AG04449 (cell line): ENCODE measurements at regions of chr1 and their contacts with region 1.

Region 1: GRCh38 chr1:110460253-110461220 is 9.6 kb downstream of the PROK1 start:
- DNase-seq: peak; percentile 24
- H3K4me3 ChIP-seq: no peak overlapping the region
- CTCF ChIP-seq: peak; percentile 84

Region 2: DNA sequence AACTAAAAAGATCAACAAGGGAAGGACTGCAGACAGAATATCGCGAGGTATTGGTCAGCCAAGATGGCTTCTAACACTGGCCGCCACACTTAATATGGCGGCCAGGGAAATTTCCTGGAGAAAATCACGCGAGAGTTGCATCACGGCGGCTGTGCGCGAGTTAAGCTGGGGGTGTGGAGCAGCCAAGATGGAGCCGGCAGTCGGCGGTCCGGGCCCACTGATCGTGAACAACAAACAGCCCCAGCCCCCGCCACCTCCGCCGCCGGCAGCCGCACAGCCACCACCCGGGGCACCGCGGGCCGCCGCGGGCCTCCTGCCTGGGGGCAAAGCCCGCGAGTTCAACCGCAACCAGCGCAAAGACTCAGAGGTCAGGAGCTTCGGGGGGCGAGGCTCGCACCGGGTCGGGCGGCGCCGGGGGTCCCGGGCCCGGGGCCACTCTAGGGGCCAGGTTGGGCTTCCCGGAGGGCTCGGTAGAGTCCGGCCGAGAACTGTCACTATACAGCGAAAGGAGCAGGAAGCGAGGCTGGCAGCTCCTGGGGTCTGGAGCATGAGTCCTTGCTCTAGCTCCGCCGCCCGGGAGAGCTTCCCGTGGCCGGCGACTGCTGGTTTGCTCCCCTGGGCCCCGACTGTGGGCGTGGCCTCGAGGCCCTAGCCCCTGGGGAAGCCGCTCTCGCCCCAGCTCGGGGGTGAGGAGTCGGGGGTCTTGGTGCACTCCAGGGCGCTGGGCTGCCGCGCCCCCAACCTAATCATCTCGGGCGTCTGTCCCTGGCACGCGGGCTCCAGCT is 425.9 kb before region 1 on chr1 and contains the start of gene STRIP1:
- CTCF ChIA-PET with region 1: interaction called, 18 read pairs
- POLR2A ChIA-PET with region 1: no interaction called
- DNase-seq: peak; percentile 78
- H3K4me3 ChIP-seq: peak within 1 kb of the TSS; percentile 84
- CTCF ChIP-seq: no peak

Region 3: DNA sequence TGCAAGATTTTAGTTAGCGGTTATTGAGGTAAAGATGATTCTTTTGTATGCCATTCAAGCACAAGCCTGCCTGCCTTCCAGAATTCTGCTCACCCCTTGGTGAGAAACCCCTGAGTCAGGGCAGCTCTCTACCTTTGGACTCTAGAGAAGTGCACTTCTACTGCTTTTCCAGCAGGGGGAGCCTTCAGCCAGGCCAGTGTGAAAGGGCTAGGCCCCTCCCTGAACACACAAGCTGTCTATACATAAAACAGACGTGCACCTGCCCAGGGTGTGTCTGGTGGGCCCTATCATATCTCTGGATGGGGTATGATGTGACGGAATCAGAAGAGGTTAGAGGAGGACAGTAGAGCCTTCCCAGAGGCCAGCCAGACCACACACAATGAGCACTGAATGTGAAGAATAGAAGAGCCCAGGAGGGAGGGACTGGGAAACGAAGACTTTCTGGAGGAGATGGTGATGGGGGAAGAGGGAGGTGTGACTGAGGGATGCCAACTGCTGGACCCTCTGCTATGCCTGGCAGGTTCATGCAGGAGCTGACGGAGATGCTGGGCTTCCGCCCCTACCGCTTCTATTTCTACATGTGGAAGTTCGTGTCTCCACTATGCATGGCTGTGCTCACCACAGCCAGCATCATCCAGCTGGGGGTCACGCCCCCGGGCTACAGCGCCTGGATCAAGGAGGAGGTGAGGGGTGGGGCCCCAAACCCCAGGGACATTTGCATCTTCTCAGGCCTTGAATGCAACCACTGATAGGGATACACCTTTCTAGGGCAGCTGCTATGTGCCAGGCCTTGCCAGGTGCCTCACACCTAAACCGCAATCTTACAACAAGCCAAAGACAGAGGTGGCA is 263.4 kb before region 1 on chr1:
- CTCF ChIA-PET with region 1: interaction called, 821 read pairs
- POLR2A ChIA-PET with region 1: no interaction called
- DNase-seq: no peak
- H3K4me3 ChIP-seq: no peak overlapping the region
- CTCF ChIP-seq: peak; percentile 92

Region 4: DNA sequence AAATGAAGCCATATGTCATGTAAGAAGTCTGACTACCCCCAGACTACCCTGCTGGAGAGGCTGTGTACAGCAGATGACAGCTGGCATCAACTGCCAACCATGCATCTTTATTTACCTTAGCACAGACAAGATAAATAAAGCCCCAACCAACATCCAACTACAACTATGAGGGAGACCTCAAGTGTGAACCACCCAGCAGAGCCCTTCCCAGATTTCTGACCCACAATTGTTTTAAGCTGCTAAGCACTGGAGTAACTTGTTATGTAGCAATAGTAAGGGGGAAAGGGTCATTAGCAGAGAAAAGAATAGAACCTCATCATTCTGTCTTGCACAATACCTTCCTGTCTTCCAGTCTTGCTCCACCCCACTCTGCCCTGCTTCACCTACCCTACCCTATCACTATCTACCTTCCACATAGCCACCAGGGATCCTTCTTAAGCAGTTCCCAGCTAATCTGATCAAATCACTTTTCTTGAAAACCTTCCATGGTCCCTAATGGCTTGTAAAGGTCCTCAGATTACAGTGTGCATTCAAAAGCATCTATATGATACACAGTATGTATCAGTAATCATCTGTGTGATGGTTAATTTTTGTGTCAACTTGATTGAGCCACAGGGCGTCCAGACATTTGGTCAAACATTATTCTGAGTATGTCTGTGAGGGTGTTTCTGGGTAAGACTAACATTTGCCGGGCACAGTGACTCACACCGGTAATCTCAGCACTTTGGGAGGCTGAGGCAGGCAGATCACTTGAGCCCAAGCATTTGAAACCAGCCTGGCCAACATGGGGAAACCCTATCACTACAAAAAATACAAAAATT is 141.0 kb before region 1 on chr1:
- CTCF ChIA-PET with region 1: interaction called, 44 read pairs
- POLR2A ChIA-PET with region 1: no interaction called
- DNase-seq: no peak
- H3K4me3 ChIP-seq: no peak overlapping the region
- CTCF ChIP-seq: no peak

Region 5: DNA sequence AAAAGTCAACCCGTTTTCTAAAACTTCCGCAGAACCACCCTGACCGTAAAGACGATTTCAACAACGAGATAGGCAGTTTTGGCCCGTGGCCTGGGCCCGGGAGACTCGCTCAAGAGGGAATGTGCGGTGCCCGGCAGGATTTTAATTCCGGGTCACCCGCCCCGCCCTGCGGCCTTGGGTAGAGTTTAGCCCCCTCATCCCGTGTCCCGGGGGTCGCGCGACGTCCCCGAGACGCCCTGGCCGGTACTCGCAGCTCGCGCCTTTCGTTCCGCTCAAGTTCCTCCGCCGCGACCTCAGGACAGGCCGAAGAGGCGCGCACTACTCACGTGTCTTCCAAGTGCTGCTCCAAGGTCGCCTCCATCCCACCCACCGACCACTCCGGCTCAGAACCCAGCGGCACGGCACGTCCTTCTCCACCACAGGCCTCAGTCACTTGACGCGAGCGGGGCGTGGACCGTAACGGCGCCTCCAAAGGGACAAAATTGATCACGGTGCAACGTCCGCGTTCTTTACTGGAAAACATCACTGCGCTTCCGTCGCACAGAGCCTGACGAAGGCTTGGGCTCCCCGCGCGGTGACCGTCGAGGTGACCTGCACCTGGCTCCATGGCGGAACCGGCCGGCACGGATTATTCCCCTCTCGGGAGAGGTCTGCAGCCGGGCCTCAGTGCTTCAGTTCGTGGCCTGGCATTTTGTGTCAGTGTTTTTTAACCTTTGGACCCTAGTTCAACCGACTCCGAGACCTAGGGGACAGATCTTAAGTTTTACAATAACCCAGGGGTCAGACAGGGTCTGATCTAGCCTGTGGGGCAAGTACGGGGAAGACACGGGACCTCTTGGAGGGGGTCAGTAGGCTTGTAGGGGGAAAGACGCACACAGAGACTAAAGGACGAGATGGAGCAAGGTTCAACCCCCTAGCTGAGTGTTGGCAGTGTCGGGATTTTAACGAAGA is 53.0 kb before region 1 on chr1 and contains the start of gene LAMTOR5:
- CTCF ChIA-PET with region 1: interaction called, 631 read pairs
- POLR2A ChIA-PET with region 1: interaction called, 3 read pairs
- DNase-seq: peak; percentile 55
- H3K4me3 ChIP-seq: peak within 1 kb of the TSS; percentile 98
- CTCF ChIP-seq: no peak

Region 6: GRCh38 chr1:110449661-110450651 is 10.6 kb before region 1 on chr1:
- CTCF ChIA-PET with region 1: interaction called, 55 read pairs
- POLR2A ChIA-PET with region 1: no interaction called
- DNase-seq: no peak
- H3K4me3 ChIP-seq: no peak overlapping the region
- CTCF ChIP-seq: no peak

Region 7: DNA sequence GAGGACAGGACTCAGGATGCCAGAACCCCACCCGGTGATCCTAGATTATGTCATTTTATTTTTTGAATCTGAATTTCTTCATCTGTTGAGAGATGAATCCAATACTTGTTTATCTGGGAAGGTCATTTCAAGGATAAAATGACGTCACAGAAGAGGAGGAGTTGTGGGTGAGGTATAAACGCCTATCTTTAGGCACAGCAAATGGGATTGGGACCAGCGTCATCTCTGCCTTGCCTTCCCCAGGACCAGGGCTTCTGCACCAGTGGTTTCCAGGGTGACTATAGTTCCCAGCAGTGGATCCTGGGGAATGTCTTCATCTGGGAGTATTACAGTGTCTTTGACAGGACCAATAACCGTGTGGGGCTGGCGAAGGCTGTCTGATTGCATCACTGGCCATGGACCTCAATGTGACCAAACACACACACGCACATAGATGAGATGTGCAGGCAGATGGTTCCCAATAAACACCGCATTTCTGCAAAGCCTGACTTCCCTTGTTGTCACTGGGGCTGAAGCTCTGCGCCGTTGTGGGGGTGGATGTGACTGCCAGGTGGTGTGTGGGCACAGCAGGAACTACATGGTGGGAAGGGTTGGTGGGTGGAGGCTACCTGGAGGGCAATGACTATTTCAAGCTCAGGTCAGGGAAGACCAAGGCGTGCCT is 30.4 kb after region 1 on chr1:
- CTCF ChIA-PET with region 1: interaction called, 119 read pairs
- POLR2A ChIA-PET with region 1: no interaction called
- DNase-seq: no peak
- H3K4me3 ChIP-seq: no peak overlapping the region
- CTCF ChIP-seq: no peak

Region 8: DNA sequence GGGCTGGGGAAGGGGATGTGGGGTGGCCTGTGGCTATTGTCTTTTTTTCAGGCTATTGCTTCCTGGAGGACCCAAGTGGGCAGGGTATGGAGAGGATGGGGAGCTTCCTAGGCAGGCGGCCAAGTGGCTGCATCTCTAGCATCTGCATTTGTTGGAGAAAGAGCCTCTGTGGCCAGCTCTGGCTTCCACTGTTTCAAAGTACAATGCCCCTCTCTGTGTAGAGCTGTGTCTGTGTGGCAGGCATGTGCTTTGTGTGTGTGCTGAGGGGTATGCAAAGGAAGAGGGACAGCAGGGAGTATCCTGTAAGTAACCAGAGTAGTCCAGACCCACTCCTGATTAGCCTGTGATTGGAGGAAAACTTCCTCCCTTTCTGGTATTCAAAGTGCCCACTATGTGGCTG is 105.0 kb after region 1 on chr1:
- CTCF ChIA-PET with region 1: no interaction called
- POLR2A ChIA-PET with region 1: no interaction called
- DNase-seq: no peak
- H3K4me3 ChIP-seq: no peak overlapping the region
- CTCF ChIP-seq: no peak